ENCODE measurements at regions of chr11 and their contacts with region 1.

Region 1: DNA sequence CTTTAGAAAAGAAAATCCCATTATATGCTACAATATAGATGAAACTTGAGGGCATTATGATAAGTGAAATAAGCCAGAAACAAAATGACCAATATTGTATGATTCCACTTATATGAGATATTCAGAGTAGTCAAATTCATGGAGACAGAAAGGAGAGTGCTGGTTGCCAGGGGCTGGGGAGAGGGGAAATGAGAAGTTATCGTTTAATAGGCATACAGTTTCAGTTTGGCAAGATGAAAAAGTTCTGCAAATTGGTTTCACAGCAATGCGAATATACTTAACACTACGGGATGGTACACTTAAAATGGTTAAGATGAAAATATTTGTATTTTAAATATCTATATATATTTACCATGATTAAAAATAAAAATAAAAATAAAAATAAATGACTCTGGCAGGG is 31.1 kb upstream of the RDX start:
- DNase-seq: no peak
- ATAC-seq: no peak
- H3K4me3 Mint-ChIP-seq: peak overlapping the region; percentile 76
- H3K27ac Mint-ChIP-seq: peak overlapping the region; percentile 47
- H3K4me1 Mint-ChIP-seq: peaks cover 24% of the 10 kb centered on the region
- H3K27me3 Mint-ChIP-seq: no peaks in the 10 kb centered on the region

Region 2: GRCh38 chr11:110046775-110047380 is 280.6 kb before region 1 on chr11:
- CTCF ChIA-PET with region 1: no interaction called
- POLR2A ChIA-PET with region 1: no interaction called
- intact Hi-C with region 1: no loop called
- DNase-seq: no peak
- ATAC-seq: no peak
- H3K4me3 Mint-ChIP-seq: no peak overlapping the region
- H3K27ac Mint-ChIP-seq: no peak overlapping the region
- H3K4me1 Mint-ChIP-seq: no peaks in the 10 kb centered on the region
- H3K27me3 Mint-ChIP-seq: no peaks in the 10 kb centered on the region

Region 3: DNA sequence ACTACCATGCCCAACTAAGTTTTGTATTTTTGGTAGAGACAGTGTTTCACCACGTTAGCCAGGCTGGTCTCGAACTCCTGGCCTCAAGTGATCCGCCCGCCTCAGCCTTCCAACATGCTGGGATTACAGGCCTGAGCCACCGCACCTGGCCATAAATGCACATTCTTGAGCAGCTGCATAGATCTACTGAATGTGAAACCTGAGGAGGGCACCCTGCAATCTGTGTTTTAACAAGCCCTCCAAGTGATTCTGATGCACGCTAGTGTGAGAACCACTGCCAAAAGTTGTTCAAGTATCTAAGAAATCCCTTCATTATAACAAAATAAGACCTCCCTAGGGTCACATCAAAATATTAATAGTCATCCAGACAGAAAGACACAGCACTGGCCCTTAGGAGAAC is 120.4 kb before region 1 on chr11:
- CTCF ChIA-PET with region 1: no interaction called
- POLR2A ChIA-PET with region 1: no interaction called
- intact Hi-C with region 1: no loop called
- DNase-seq: no peak
- ATAC-seq: no peak
- H3K4me3 Mint-ChIP-seq: no peak overlapping the region
- H3K27ac Mint-ChIP-seq: no peak overlapping the region
- H3K4me1 Mint-ChIP-seq: peaks cover 5% of the 10 kb centered on the region
- H3K27me3 Mint-ChIP-seq: no peaks in the 10 kb centered on the region

Region 4: DNA sequence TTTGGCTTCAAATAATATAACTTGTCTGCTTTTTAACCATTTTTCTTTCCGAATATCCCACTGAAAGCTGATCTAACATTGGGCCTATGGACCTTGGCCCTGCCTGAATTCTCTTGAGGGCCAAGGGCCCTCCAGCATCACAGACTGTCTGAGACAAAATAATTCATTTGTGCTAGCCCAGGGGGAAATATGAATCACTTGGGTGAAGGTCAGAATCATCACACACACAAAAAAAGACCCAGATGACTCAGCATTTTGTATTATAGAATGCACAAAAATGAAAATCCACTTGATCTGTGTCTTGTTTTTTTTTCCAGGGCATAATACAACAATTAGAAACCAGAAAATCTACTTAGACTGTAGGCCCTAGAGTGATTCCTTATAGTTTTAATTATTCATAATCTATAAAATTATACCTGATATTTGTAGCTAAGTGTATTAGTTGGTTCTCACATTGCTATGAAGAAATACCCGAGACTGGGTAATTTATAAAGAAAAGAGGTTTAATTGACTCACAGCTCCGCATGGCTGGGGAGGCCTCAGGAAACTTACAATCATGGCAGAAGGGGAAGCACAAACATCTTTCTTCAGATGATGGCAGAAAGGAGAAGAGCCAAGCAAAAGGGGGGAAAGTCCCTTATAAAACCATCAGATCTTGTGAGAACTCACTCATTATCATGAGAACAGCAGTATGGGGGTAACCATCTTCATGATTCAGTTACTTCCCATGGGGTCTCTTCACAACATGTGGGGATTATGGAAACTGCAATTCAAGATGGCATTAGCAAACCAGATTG is 15.5 kb before region 1 on chr11:
- CTCF ChIA-PET with region 1: interaction called, 3 read pairs
- POLR2A ChIA-PET with region 1: no interaction called
- intact Hi-C with region 1: loop called in 1 of 2 experiments (anchors 1 kb)
- DNase-seq: peak; percentile 21
- ATAC-seq: peak; percentile 86
- H3K4me3 Mint-ChIP-seq: no peak overlapping the region
- H3K27ac Mint-ChIP-seq: peak overlapping the region; percentile 72
- H3K4me1 Mint-ChIP-seq: peaks cover 15% of the 10 kb centered on the region
- H3K27me3 Mint-ChIP-seq: no peaks in the 10 kb centered on the region

Region 5: GRCh38 chr11:110337570-110338193 is 10.2 kb after region 1 on chr11:
- CTCF ChIA-PET with region 1: interaction called, 11 read pairs
- POLR2A ChIA-PET with region 1: no interaction called
- intact Hi-C with region 1: loop called in 1 of 2 experiments (anchors 1 kb)
- DNase-seq: peak; percentile 73
- ATAC-seq: peak; percentile 92
- H3K4me3 Mint-ChIP-seq: no peak overlapping the region
- H3K27ac Mint-ChIP-seq: peak overlapping the region; percentile 51
- H3K4me1 Mint-ChIP-seq: peaks cover 21% of the 10 kb centered on the region
- H3K27me3 Mint-ChIP-seq: no peaks in the 10 kb centered on the region

Region 6: GRCh38 chr11:110376711-110377324 is 49.3 kb after region 1 on chr11:
- CTCF ChIA-PET with region 1: interaction called, 4 read pairs
- POLR2A ChIA-PET with region 1: interaction called, 4 read pairs
- intact Hi-C with region 1: loop called in 1 of 2 experiments (anchors 1 kb)
- DNase-seq: peak; percentile 37
- ATAC-seq: peak; percentile 10
- H3K4me3 Mint-ChIP-seq: no peak overlapping the region
- H3K27ac Mint-ChIP-seq: no peak overlapping the region
- H3K4me1 Mint-ChIP-seq: peaks cover 17% of the 10 kb centered on the region
- H3K27me3 Mint-ChIP-seq: peaks cover 3% of the 10 kb centered on the region

Measured in activated CD4-positive, alpha-beta T cell treated with anti-CD3 and anti-CD28 coated beads for 36 hours (primary cell).